Right ventricle myocardium inferior (tissue), 1 donor: ENCODE measurements at regions of chr10 and their contacts with region 1.

Region 1: DNA sequence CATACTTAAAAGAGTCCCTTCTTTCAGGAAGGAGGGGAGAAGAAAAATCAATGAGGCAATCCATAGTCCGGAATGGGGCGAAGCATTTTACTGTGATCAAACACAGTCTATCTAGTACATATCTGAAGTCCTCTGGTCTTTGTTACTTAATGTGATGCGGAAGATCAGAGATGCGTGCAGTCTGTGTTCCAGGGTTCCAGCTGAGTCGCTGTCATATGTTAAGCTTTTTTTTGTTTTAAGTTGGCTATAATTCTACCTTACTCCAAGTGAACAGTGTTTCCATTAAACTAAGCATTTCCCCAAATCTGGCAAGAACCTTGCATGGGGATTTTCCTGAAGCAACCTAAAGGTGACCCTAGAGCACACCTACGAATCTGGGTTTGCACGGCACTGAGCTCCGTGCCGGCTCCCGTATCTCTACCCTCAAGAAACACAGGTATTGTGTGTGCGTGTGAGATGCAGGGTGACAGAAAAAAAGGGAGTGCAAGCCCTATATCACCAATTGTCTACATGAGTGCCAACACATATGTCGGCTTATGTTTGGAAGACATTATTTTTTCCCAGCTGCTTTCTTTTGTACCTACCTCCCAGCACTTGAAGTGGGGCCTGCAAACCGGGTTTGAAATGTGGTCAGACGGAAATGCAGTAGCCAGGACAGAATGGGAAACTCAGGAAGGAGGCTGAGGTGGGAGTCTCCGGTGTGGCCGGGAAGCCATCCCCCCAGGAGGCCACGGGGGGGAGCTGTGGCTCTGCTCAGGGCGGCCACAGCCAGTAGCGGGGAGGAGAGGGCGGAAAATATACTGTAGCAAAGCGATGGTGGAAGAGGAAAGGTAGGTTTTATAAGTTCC is 435.8 kb upstream of the MGMT start:
- DNase-seq: no peak
- ATAC-seq: peak; percentile 88

Region 2: GRCh38 chr10:128739930-128740329 is 291.3 kb before region 1 on chr10:
- intact Hi-C with region 1: no loop called
- DNase-seq: no peak
- ATAC-seq: no peak

Region 3: DNA sequence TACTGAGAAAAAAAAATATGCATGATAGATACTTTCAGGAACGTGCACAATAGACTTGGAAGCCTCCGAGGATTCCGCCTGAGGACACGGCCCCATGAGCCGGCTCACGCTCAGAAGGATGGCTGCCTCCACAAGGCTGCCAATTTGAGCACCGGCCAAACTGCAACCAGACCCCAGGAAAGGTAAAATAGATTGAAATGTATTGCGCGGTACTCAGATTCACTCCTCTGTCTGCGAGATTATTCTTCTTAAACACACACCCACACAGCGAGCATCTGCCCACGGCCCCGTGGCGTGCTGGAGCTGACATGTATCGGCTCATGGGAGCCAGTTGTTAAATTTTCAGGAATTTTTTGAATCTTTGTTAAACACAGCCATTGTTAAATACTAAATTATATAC is 251.8 kb before region 1 on chr10:
- intact Hi-C with region 1: no loop called
- DNase-seq: no peak
- ATAC-seq: no peak

Region 4: GRCh38 chr10:129332476-129332875 is 301.3 kb after region 1 on chr10:
- intact Hi-C with region 1: loop called (anchors 2 kb)
- DNase-seq: no peak
- ATAC-seq: no peak

Region 5: DNA sequence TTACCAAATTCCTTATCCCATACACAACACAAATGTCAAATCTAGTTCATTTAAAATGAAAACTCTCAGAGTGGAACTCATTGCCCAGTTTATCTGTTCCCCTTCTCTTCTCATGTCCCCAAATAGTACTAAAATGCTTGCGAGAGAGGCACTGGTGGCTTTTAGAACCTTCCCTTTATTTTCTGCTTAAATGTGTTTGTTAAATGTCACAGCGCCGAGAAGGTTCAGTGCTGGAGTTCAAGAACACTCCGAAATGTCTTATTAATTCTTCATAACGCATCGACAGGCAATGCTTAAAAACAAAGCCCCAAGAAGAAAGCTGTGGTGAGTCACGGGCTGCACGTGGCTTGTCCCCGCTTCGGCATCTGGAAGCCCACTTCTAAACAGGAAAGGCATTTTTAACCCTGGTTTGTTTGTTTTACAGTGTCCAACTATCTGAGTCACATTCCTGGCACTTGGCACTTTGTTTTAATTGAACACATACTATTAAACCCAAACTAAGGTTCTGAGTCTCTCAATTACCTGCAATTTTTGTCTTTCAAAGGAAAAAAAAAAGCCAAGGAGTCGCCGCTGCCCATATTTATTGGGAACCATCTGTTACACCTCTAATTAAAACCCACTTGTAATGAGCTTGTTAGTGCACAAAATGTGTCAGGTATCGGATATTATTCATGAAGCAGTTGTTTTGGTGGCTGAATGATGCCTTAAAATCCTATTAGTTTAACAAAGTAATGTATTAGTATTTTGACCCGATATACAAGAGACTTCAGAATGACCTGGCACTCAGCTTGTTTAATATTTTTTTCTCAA is 385.9 kb after region 1 on chr10:
- intact Hi-C with region 1: loop called (anchors 10 kb)
- DNase-seq: no peak
- ATAC-seq: no peak

Region 6: GRCh38 chr10:129626796-129627435 is 595.7 kb after region 1 on chr10:
- intact Hi-C with region 1: loop called (anchors 10 kb)
- DNase-seq: no peak
- ATAC-seq: peak; percentile 59

Region 7: GRCh38 chr10:129694691-129695243 is 663.5 kb after region 1 on chr10:
- intact Hi-C with region 1: loop called (anchors 10 kb)
- DNase-seq: peak; percentile 84
- ATAC-seq: peak; percentile 90

Region 8: GRCh38 chr10:129971381-129972144 is 940.3 kb after region 1 on chr10:
- intact Hi-C with region 1: loop called (anchors 5 kb)
- DNase-seq: peak; percentile 77
- ATAC-seq: peak; percentile 88

Region 9: DNA sequence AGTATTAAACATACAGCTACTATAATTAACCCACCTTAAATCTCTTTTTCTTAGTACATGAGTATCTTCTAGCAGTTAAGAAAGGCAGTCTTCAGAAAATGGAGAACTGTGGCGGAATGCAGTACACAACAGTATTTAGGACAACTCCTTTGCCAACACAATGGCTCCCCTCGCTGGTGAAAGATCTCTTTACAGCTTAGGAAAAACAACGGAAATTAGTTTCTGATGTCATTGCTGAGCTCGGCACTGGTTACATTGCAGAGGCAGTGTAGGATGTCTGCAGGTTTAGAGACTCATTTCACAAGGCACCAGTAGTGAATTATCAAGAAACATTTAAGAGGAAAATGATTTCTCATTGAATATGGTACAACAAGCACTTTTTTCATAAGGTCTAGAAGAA is 1148.4 kb after region 1 on chr10:
- intact Hi-C with region 1: no loop called
- DNase-seq: no peak
- ATAC-seq: peak; percentile 64